ENCODE measurements at regions of chr14 and their contacts with region 1.

Region 1: DNA sequence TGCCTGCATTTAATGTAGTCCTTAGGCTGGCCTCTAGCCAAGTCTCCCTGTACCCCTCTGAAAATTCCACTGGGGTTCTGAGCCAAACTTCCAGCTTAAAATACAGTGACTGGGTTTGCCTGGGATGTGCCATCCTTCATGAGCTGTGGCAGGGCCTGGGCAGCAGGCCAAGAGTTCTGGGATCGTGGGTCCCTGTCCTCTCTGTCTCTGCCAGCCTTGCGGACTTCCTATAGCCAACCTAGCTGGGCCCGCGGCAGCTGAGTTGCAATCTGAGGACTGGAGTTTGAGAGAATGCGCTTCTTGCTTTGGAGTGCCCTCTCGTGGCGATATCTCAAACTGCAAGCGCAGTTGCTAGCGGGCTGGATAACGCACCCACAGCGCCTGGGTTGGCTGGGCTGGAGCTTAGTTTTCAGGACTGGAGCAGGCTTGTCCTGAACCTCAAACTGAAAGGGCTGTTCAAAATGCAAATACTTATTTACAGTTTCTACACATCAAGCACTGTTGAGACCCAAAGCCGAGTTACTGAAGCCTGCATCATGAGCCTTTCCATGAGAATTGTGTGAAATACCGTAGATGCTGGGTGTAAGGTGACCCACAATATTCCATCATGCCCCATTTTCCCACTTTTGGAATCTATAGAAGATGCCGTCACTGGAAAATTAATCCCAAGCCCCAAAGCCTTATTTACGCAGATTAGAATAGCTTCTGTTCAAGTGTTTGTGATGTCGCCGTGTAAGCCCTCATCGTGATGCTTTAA is 7.3 kb upstream of the IFI27L2 start:
- DNase-seq: peak; percentile 87 to 96 (median 94)
- ATAC-seq: peak; percentile 89 to 91
- H3K4me3 ChIP-seq: no peak overlapping the region
- H3K27ac ChIP-seq: no peak overlapping the region
- H3K4me1 ChIP-seq: no peaks in the 10 kb centered on the region
- H3K27me3 ChIP-seq: no peaks in the 10 kb centered on the region

Region 2: GRCh38 chr14:94036313-94037050 is 100.3 kb before region 1 on chr14:
- intact Hi-C with region 1: loop called (anchors 2 to 5 kb)
- DNase-seq: peak; percentile 70 to 88 (median 83)
- ATAC-seq: peak; percentile 88
- H3K4me3 ChIP-seq: no peak overlapping the region
- H3K27ac ChIP-seq: peak overlapping the region; percentile 4
- H3K4me1 ChIP-seq: peaks cover under 1% of the 10 kb centered on the region
- H3K27me3 ChIP-seq: no peaks in the 10 kb centered on the region

Region 3: DNA sequence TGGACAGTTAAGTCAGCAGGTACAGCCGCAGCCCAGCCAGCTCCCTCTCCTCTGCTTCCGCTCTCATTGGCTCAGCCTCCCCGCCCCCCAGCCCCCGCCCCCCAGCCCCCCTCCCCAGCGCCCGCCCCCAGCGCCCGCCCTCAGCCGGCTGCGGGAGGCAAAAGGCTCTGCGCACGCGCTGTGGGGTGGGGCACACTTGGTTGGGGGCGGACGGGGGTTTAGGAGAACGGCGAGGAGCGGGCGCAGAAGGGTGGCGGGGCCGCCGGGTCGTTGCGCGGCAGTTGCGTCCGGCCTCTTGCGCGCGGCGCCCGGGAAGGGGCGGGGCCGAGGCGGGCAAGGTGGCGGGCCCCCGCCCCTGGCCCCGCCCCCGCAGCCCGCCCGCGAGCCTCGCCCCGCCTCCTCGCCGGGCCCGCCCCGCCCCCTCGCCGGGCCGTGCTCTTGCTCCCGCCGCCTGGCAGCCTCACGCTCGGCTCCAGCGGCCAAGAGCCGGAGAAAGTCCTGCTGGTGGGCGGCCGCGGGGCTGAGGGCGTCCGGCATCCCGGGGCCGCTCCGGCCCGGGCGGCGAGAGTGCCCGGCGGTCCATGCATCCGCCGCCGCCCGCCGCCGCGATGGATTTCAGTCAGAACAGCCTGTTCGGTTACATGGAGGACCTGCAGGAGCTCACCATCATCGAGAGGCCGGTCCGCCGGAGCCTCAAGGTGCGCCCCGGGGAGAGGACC is 37.3 kb after region 1 on chr14 and contains the start of gene PPP4R4:
- intact Hi-C with region 1: loop called in 2 of 4 experiments (anchors 5 kb)
- DNase-seq: peak; percentile 87 to 95 (median 94)
- ATAC-seq: peak; percentile 94
- H3K4me3 ChIP-seq: peak within 1 kb of the TSS; percentile 84
- H3K27ac ChIP-seq: peak within 1 kb of the TSS; percentile 14
- H3K4me1 ChIP-seq: peaks cover 2% of the 10 kb centered on the region
- H3K27me3 ChIP-seq: no peaks in the 10 kb centered on the region
- total RNA-seq, gene PPP4R4: 0.41 to 0.74 (median 0.48) TPM

Region 4: DNA sequence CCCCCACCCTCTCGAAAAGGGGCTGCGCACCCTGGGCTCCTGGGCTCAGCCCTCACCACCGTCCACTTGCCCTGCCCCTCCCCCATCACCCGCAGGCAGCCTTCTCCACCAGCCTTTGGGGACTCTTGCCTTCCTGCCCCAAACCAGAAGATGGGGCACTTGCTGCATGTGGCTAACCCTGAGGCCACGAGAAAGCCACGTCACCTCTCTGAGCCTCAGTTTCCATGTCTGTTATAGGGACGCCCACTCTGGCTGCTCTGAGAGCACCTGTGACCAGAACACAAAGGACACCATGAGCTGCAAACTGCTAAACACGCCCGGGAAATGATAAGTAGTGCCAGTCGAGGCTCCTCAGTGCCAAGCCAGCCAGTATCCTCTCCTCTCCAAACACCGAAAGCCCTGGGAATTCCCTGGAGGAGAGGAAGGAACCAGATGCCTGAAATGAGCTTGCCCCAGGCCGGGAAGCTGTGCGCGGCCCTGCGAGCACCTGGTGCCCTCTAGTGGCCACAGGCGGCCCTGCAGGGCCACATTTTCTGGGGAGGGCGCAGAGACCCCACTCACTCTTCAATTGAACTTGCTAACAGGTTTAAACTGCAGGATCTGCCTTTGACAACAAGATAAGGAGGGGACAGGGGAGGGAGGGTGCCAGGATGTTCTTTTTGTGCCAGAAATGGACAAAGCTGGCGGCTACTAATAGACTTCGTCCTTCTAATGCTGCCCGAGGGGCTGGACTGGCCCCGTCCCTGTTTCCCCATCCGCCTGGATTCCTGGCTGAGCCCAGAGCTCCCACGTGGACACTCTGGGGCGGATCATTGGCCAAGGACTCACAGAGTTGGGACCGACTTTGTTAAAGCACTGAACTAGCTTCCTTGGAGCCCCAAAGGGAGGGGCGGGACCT is 349.4 kb after region 1 on chr14:
- intact Hi-C with region 1: loop called in 1 of 4 experiments (anchors 5 kb)
- DNase-seq: peak; percentile 64 to 74 (median 69)
- ATAC-seq: peak; percentile 51 to 82
- H3K4me3 ChIP-seq: no peak overlapping the region
- H3K27ac ChIP-seq: no peak overlapping the region
- H3K4me1 ChIP-seq: no peaks in the 10 kb centered on the region
- H3K27me3 ChIP-seq: no peaks in the 10 kb centered on the region